Naive thymus-derived CD4-positive, alpha-beta T cell (primary cell): ENCODE measurements at regions of chr6 and their contacts with region 1.

Region 1: GRCh38 chr6:144582939-144583613 is 297.9 kb downstream of the UTRN start:
- DNase-seq: peak in 8 of 9 donors; percentile 43 to 77 (median 68)
- ATAC-seq: peak; percentile 86
- H3K4me3 ChIP-seq: peak overlapping the region; percentile 33
- H3K4me3 Mint-ChIP-seq: peak overlapping the region; percentile 70 to 91 (median 86)
- H3K27ac ChIP-seq: peak overlapping the region; percentile 41
- H3K27ac Mint-ChIP-seq: peak overlapping the region; percentile 5 to 93 (median 82)
- H3K4me1 ChIP-seq: peaks cover 19 to 20% of the 10 kb centered on the region in 2 donors
- H3K4me1 Mint-ChIP-seq: peaks cover 14 to 62% (median 32%) of the 10 kb centered on the region in 7 donors
- H3K27me3 ChIP-seq: no peaks in the 10 kb centered on the region
- H3K27me3 Mint-ChIP-seq: no peaks in the 10 kb centered on the region

Region 2: DNA sequence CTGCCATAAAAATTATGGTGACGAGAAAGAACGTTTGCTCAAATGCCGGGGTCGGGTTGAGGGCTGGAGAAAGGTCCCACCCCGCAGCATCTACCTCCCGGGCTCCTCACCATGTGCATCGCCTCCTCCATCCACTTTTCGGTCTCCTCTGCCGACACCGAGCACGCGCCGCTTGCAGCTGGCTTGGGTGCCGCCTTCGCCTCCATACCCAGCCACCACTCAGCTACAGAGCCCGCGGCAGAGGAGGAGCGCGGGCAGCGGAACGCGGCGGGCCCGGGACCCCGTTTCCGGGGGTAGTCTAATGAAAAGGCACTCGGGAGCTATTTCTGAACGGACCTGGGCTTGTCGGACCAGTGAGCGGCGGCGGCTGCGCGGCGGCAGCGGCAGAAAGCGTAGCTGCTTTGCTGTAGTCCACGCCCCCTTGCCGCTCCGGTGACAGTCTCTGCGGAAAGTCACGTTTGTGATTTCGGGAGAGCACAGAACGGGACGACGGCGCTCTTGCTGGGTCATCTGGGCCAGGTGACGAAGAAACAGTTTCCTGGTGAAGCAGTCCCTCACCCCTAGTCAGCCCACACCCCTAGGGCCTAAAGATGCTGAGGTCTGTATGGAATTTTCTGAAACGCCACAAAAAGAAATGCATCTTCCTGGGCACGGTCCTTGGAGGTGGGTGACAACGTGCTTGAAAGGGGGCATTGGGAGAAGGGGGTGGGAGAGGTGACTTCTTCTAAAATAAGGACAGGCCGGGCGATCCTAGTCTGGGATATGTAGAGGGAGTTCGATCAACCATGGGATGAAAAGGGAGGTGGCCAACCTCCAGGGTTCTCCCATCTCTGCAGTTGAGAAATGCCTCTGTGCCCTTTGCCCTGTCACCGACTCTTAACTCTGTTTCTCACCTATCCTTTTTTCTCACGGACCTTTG is 1132.4 kb before region 1 on chr6 and contains the starts of genes ADAT2 and PEX3:
- CTCF ChIA-PET with region 1: no interaction called
- POLR2A ChIA-PET with region 1: no interaction called
- intact Hi-C with region 1: loop called in 1 of 2 experiments (anchors 2 kb)
- DNase-seq: peak; percentile 87 to 95 (median 94)
- ATAC-seq: peak; percentile 98
- H3K4me3 ChIP-seq: peak within 1 kb of the TSS; percentile 89
- H3K4me3 Mint-ChIP-seq: peak within 1 kb of the TSS; percentile 84 to 100 (median 99)
- H3K27ac ChIP-seq: peak within 1 kb of the TSS; percentile 80
- H3K27ac Mint-ChIP-seq: peak within 1 kb of the TSS; percentile 93 to 99 (median 96)
- H3K4me1 ChIP-seq: peaks cover 14 to 18% of the 10 kb centered on the region in 2 donors
- H3K4me1 Mint-ChIP-seq: peaks cover 20 to 61% (median 49%) of the 10 kb centered on the region in 7 donors
- H3K27me3 ChIP-seq: no peaks in the 10 kb centered on the region
- H3K27me3 Mint-ChIP-seq: no peaks in the 10 kb centered on the region
- total RNA-seq, gene ADAT2: 18.4 to 25.8 (median 20.8) TPM
- total RNA-seq, gene PEX3: 10.9 to 28.8 (median 19.1) TPM

Region 3: DNA sequence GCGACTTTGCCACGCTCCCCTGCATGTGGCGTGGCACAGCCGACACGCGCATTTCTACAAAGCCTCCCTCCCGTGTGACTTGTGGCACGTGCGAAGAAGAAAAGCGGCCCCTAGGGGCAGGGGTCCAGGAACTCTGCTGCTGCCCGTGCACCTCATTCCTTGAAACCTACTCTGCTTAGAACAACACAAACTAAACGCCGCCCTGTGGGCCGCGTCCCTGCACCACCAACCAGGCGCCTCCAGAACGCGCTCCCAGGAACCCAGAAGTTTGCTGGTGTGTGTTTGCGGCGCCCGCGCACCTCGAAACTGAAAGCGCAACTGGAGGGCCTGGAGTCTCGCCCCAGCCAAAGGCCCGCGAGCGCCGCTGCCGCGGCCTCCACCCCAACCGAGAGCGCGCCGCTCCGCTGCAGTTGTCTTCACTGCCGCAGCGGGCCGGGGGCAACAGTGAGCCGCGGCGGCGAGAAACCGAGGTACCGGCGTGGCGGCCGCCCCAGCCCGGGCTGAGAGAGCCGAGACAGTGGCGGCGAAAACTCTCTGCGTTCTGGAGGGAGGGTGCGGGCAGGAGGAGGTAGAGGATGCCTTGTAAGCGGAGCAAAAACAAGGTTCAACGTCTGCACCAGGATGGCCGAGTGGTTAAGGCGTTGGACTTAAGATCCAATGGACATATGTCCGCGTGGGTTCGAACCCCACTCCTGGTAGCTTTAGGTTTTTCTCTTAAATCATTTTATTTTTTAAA is 367.0 kb before region 1 on chr6:
- CTCF ChIA-PET with region 1: no interaction called
- POLR2A ChIA-PET with region 1: no interaction called
- intact Hi-C with region 1: loop called in 1 of 2 experiments (anchors 1 kb)
- DNase-seq: peak; percentile 84 to 96 (median 94)
- ATAC-seq: peak; percentile 91
- H3K4me3 ChIP-seq: peak overlapping the region; percentile 73
- H3K4me3 Mint-ChIP-seq: peak overlapping the region; percentile 84 to 99 (median 97)
- H3K27ac ChIP-seq: peak overlapping the region; percentile 86
- H3K27ac Mint-ChIP-seq: peak overlapping the region; percentile 91 to 100 (median 100)
- H3K4me1 ChIP-seq: peaks cover 15 to 18% of the 10 kb centered on the region in 2 donors
- H3K4me1 Mint-ChIP-seq: peaks cover 12 to 48% (median 40%) of the 10 kb centered on the region in 7 donors
- H3K27me3 ChIP-seq: no peaks in the 10 kb centered on the region
- H3K27me3 Mint-ChIP-seq: peaks cover 0 to 12% (median 0%) of the 10 kb centered on the region in 5 donors

Region 4: GRCh38 chr6:144602523-144603180 is 19.6 kb after region 1 on chr6:
- CTCF ChIA-PET with region 1: interaction called, 3 read pairs
- POLR2A ChIA-PET with region 1: no interaction called
- intact Hi-C with region 1: loop called (anchors 1 to 2 kb)
- DNase-seq: peak in 1 of 9 donors; percentile 9
- ATAC-seq: no peak
- H3K4me3 ChIP-seq: no peak overlapping the region
- H3K4me3 Mint-ChIP-seq: peak overlapping the region in 9 of 10 donors; percentile 6 to 60 (median 32)
- H3K27ac ChIP-seq: no peak overlapping the region
- H3K27ac Mint-ChIP-seq: peak overlapping the region in 1 of 9 donors; percentile 20
- H3K4me1 ChIP-seq: peaks cover 3 to 15% of the 10 kb centered on the region in 2 donors
- H3K4me1 Mint-ChIP-seq: peaks cover 33 to 83% (median 65%) of the 10 kb centered on the region in 7 donors
- H3K27me3 ChIP-seq: no peaks in the 10 kb centered on the region
- H3K27me3 Mint-ChIP-seq: no peaks in the 10 kb centered on the region

Region 5: GRCh38 chr6:144726129-144726522 is 143.1 kb after region 1 on chr6:
- CTCF ChIA-PET with region 1: no interaction called
- POLR2A ChIA-PET with region 1: no interaction called
- intact Hi-C with region 1: loop called in 1 of 2 experiments (anchors 10 kb)
- DNase-seq: no peak
- ATAC-seq: peak; percentile 46
- H3K4me3 ChIP-seq: no peak overlapping the region
- H3K4me3 Mint-ChIP-seq: peak overlapping the region in 3 of 10 donors; percentile 13 to 57 (median 14)
- H3K27ac ChIP-seq: no peak overlapping the region
- H3K27ac Mint-ChIP-seq: peak overlapping the region in 8 of 9 donors; percentile 3 to 80 (median 37)
- H3K4me1 ChIP-seq: peaks cover 0 to 4% of the 10 kb centered on the region in 2 donors
- H3K4me1 Mint-ChIP-seq: peaks cover 22 to 54% (median 30%) of the 10 kb centered on the region in 7 donors
- H3K27me3 ChIP-seq: no peaks in the 10 kb centered on the region
- H3K27me3 Mint-ChIP-seq: no peaks in the 10 kb centered on the region

Region 6: DNA sequence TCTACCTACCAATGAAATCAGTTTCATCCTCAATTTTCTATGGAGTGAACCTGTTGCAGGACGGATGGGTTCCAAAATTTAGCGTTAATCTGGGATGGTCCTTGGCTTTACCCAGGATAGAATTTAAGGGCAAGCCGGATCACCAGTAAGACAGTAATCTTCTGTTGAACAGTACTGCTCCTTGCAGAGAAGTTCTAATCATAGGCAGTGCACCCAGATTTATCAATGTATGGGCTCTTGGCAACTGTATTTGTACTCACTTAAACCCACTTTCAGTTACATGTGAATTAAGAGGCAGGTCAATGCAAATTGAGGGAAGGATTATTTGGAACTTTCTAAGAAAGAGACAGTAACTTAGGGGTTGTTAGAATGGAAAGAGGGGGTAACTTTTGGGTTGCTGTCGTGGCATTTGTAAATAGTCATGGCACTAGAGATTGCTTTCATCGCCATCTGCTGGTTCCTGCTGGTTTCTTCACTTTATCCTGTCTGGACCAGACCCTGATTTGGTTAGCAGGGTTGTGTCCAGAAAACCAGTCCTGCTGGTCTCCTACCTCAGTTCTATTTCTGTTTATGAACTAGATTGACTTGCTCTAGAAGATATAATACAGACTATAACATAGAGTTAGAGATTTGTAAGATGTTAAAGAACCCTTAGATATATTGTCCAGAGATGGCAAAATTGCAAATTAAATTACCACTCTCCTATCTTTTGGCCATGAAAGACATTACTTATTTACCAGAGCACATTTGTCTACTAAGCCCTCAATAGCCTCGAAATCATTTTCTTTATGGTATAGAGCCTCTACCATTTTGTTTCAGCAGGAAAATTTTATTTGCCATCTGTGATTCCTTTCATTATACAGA is 348.3 kb after region 1 on chr6:
- CTCF ChIA-PET with region 1: no interaction called
- POLR2A ChIA-PET with region 1: no interaction called
- intact Hi-C with region 1: loop called (anchors 1 kb)
- DNase-seq: peak in 5 of 9 donors; percentile 4 to 31 (median 11)
- ATAC-seq: peak; percentile 47
- H3K4me3 ChIP-seq: no peak overlapping the region
- H3K4me3 Mint-ChIP-seq: no peak overlapping the region
- H3K27ac ChIP-seq: no peak overlapping the region
- H3K27ac Mint-ChIP-seq: no peak overlapping the region
- H3K4me1 ChIP-seq: no peaks in the 10 kb centered on the region
- H3K4me1 Mint-ChIP-seq: peaks cover 0 to 3% (median 0%) of the 10 kb centered on the region in 7 donors
- H3K27me3 ChIP-seq: no peaks in the 10 kb centered on the region
- H3K27me3 Mint-ChIP-seq: peaks cover 0 to 15% (median 0%) of the 10 kb centered on the region in 5 donors

Region 7: DNA sequence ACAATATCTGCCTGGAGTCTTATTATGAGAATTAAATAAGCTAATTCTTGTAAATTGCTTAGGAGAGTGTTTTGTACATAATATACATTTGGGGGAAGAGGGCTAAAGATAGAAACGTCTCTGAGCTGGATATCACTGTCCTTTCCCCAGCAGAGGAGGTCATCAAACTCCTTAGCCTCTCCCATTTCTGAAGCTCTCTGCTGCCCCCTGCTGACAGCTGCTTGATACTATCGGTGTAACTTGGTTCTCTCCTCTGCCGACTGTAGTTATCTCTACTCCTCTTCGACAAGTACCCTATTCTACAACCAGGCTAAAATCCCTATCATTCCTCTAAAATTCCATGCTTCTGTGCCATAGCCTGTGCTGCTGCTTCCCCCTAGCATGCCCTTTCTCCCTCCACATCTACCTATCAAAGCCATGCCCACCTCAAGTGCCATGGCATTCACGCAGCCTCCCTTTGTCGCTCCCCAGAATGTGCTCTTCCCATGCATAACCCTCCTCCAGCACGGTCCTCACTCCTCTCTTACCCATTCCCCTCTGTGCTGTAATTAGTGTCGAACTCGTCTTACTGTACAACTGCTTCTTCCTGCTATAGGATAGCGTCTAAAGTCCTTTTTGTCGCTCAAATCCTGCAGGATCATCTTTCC is 1051.0 kb after region 1 on chr6:
- CTCF ChIA-PET with region 1: no interaction called
- POLR2A ChIA-PET with region 1: no interaction called
- intact Hi-C with region 1: loop called (anchors 1 kb)
- DNase-seq: peak; percentile 31 to 76 (median 59)
- ATAC-seq: peak; percentile 85
- H3K4me3 ChIP-seq: no peak overlapping the region
- H3K4me3 Mint-ChIP-seq: no peak overlapping the region
- H3K27ac ChIP-seq: no peak overlapping the region
- H3K27ac Mint-ChIP-seq: no peak overlapping the region
- H3K4me1 ChIP-seq: no peaks in the 10 kb centered on the region
- H3K4me1 Mint-ChIP-seq: peaks cover 2 to 11% (median 7%) of the 10 kb centered on the region in 7 donors
- H3K27me3 ChIP-seq: no peaks in the 10 kb centered on the region
- H3K27me3 Mint-ChIP-seq: no peaks in the 10 kb centered on the region